SK-N-SH (cell line): ENCODE measurements at regions of chr2 and their contacts with region 1.

Region 1: GRCh38 chr2:38535744-38536506 is 66.8 kb downstream of the HNRNPLL start:
- DNase-seq: peak; percentile 97
- H3K4me3 ChIP-seq: peak overlapping the region; percentile 57 to 89
- H3K27ac ChIP-seq: no peak overlapping the region
- H3K4me1 ChIP-seq: peaks cover 0 to 3% of the 10 kb centered on the region in 2 experiments; a peak in 1 of 4 replicates
- H3K27me3 ChIP-seq: no peaks in the 10 kb centered on the region
- CTCF ChIP-seq: peak; percentile 93
- EP300 ChIP-seq: no peak
- RAD21 ChIP-seq: peak; percentile 84

Region 2: GRCh38 chr2:38514603-38515159 is 21.2 kb before region 1 on chr2:
- CTCF ChIA-PET with region 1: interaction called, 18 read pairs
- POLR2A ChIA-PET with region 1: no interaction called
- DNase-seq: no peak
- H3K4me3 ChIP-seq: no peak overlapping the region
- H3K27ac ChIP-seq: no peak overlapping the region
- H3K4me1 ChIP-seq: peaks cover 3 to 4% of the 10 kb centered on the region in 2 experiments; a peak in 2 of 4 replicates
- H3K27me3 ChIP-seq: no peaks in the 10 kb centered on the region
- CTCF ChIP-seq: no peak
- EP300 ChIP-seq: no peak
- RAD21 ChIP-seq: no peak

Region 3: DNA sequence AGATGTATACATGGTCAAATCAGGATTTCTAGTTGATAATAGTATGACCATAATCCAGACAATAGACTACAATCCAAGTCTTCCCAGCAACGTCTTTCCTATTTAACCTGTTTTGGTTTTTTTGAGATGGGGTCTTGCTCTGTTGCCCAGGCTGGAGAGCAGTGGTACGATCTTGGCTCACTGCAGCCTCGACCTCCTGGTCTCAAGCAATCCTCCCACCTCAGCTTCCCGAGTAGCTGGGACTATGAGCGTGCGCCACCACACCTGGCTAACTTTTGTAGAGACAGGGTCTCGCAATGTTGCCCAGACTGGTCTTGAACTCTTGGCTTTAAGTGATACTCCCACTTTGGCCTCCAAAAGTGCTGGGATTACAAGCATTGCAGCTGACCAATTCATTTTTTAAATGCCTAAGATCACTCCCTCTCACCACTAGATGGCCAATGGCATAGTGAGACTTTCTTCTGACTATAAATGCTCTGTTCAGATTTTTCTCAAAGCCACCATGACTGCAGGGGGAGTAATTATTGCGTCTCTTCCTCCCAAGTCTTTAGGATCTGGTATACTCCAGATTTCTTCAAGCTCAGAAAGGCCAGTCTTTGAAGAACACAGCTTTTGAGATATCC is 19.2 kb after region 1 on chr2:
- CTCF ChIA-PET with region 1: interaction called, 40 read pairs
- POLR2A ChIA-PET with region 1: no interaction called
- DNase-seq: no peak
- H3K4me3 ChIP-seq: no peak overlapping the region
- H3K27ac ChIP-seq: no peak overlapping the region
- H3K4me1 ChIP-seq: peaks cover 0 to 2% of the 10 kb centered on the region in 2 experiments; a peak in 1 of 4 replicates
- H3K27me3 ChIP-seq: no peaks in the 10 kb centered on the region
- CTCF ChIP-seq: peak; percentile 57
- EP300 ChIP-seq: no peak
- RAD21 ChIP-seq: no peak

Region 4: GRCh38 chr2:38572167-38572566 is 36.2 kb after region 1 on chr2:
- CTCF ChIA-PET with region 1: interaction called, 14 read pairs
- POLR2A ChIA-PET with region 1: no interaction called
- DNase-seq: no peak
- H3K4me3 ChIP-seq: no peak overlapping the region
- H3K27ac ChIP-seq: no peak overlapping the region
- H3K4me1 ChIP-seq: peaks cover 2 to 7% of the 10 kb centered on the region in 2 experiments; a peak in 3 of 4 replicates
- H3K27me3 ChIP-seq: no peaks in the 10 kb centered on the region
- CTCF ChIP-seq: no peak
- EP300 ChIP-seq: no peak
- RAD21 ChIP-seq: no peak

Region 5: GRCh38 chr2:38602732-38603401 is 66.9 kb after region 1 on chr2 and contains the start of gene HNRNPLL:
- CTCF ChIA-PET with region 1: interaction called, 30 read pairs
- POLR2A ChIA-PET with region 1: no interaction called
- DNase-seq: peak; percentile 100
- H3K4me3 ChIP-seq: peak within 1 kb of the TSS; percentile 90 to 94
- H3K27ac ChIP-seq: peak within 1 kb of the TSS; percentile 92 to 96
- H3K4me1 ChIP-seq: peaks cover 9 to 19% of the 10 kb centered on the region in 2 experiments
- H3K27me3 ChIP-seq: no peaks in the 10 kb centered on the region
- CTCF ChIP-seq: peak; percentile 19
- EP300 ChIP-seq: peak; percentile 6 to 31; a peak in 1 of 4 replicates
- RAD21 ChIP-seq: no peak
- polyA plus RNA-seq, gene HNRNPLL: 24.4 and 29.8 TPM in 2 replicates

Region 6: DNA sequence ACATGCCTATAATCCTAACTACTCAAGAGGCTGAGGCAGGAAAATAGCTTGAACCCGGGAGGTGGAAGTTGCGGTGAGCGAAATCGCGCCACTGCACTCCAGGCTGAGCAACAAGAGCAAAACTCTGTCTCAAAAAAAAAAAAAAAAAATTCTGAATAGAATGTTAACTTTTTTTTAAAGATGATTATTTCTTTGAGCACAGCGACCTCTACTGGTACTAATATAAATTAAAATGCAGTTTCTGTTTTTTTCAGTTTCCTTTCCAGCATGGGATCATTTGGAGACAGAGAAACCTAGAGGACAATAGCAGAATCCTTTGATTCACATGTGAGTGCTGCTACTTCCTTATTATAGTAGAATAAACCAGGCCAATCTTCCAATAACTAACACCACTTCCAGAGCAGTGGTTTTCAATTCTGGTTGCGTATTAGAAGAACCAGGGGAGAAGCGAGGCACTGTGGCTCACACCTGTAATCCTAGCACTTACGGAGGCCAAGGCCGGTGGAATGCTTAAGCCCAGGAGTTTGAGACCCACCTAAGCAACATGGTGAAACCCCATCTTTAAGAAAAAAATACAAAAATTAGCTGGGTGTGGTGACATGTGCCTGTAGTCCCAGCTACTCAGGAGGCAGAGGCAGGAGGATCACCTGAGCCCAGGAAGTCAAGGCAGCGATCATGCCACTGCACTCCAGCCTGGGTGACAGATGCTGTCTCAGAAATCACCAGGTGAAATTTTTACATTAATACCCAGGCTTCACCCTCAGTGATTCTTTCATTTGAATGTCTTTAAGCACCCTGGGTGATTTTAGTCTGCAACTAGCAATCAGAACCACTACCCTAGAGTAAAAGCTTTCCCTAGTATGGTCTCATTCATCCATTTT is 205.2 kb after region 1 on chr2:
- CTCF ChIA-PET with region 1: interaction called, 36 read pairs
- POLR2A ChIA-PET with region 1: interaction called, 4 read pairs
- DNase-seq: peak; percentile 50
- H3K4me3 ChIP-seq: no peak overlapping the region
- H3K27ac ChIP-seq: peak overlapping the region in 1 of 2 experiments; percentile 23; a peak in 2 of 4 replicates
- H3K4me1 ChIP-seq: peaks cover 2 to 19% of the 10 kb centered on the region in 2 experiments
- H3K27me3 ChIP-seq: no peaks in the 10 kb centered on the region
- CTCF ChIP-seq: peak; percentile 75
- EP300 ChIP-seq: no peak
- RAD21 ChIP-seq: peak; percentile 56